Activated CD4-positive, alpha-beta T cell treated with anti-CD3 and anti-CD28 coated beads for 36 hours (primary cell): ENCODE measurements at regions of chrX and their contacts with region 1.

Region 1: DNA sequence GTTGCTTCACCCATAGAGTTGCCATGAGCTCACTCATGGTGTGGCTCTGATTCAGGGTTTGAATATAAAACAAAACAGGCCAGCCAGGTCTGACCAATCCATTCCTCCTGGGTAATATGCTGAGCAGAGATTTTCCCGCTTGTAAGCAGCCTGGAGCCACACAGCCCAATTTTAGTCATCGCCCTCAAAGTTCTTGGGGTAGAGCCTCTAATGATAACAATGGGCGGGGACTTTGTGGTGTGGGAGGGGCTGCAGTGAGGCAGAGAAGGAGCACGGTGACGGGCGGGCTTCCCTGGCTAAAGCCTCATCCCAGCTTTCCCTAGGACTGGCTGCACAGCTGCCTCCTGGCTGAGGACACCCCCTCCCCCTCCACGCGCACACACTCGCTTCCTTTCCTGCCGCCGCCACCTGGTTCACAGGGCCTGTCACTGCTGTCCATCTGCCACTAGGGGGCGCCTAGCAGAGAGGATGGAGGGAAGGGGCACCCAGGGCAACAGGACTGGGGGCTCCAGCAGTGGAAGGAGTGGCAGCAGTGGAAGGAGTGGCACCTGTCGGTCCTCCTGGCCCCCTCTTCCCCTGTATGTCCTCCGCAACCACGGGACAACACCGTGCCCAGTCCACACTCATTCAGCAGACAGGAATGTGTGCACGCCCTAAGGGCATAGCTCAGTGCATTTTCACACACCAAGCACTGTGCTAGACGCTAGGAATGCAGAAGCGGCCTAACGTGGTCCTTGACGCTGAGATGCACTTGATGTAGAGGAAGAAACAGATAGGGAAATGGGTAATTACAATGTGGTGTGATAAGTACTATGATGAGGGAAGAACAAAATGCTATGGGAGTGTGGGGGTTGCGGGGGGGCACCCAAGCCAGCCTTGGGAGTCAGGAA is 26.8 kb downstream of the PRPS1 start:
- DNase-seq: peak; percentile 81
- ATAC-seq: peak; percentile 83
- H3K4me3 Mint-ChIP-seq: no peak overlapping the region
- H3K27ac Mint-ChIP-seq: peak overlapping the region; percentile 2
- H3K4me1 Mint-ChIP-seq: peaks cover 12% of the 10 kb centered on the region
- H3K27me3 Mint-ChIP-seq: no peaks in the 10 kb centered on the region

Region 2: GRCh38 chrX:107537815-107538214 is 117.3 kb before region 1 on chrX:
- CTCF ChIA-PET with region 1: interaction called, 3 read pairs
- POLR2A ChIA-PET with region 1: no interaction called
- intact Hi-C with region 1: loop called (anchors 2 to 5 kb)
- DNase-seq: peak; percentile 60
- ATAC-seq: peak; percentile 70
- H3K4me3 Mint-ChIP-seq: no peak overlapping the region
- H3K27ac Mint-ChIP-seq: no peak overlapping the region
- H3K4me1 Mint-ChIP-seq: no peaks in the 10 kb centered on the region
- H3K27me3 Mint-ChIP-seq: peaks cover 3% of the 10 kb centered on the region

Region 3: DNA sequence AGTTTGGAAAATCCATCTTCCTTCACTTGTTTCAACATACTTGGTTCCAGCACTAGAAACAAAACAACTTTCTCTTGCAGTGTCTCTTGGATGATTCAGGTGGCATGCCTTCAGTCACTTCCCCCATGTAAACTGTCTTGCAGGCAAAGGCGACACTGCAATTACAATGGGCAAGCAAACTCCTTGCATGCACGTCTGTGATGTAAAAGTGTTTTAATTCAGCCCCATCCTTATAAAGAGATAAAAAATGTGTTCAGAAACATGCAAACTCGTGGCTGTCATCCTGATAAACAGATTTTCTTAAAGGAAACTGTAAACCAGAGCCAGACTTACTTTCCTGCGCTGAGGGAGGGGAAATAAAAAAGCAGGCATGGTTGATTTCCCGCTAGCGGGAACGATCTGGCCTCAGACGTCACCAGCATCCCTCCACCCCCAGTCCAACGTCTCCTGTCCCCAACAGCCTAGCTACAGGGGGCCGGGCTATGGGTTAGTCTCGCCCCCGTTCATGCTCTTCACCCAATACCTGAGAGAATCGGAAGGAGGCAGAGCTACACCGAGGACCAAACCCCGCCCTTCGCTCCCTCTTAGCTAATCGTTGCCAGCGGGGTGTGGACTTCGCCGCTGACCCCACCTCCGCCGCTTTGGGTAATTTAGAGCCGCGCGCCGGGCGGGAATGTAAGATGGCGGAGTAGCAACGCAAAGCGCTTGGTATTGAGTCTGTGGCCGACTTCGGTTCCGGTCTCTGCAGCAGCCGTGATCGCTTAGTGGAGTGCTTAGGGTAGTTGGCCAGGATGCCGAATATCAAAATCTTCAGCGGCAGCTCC is 27.1 kb before region 1 on chrX and contains the start of gene PRPS1:
- CTCF ChIA-PET with region 1: interaction called, 4 read pairs
- POLR2A ChIA-PET with region 1: interaction called, 3 read pairs
- intact Hi-C with region 1: loop called in 1 of 2 experiments (anchors 1 kb)
- DNase-seq: peak; percentile 93
- ATAC-seq: peak; percentile 99
- H3K4me3 Mint-ChIP-seq: peak within 1 kb of the TSS; percentile 89
- H3K27ac Mint-ChIP-seq: peak within 1 kb of the TSS; percentile 93
- H3K4me1 Mint-ChIP-seq: peaks cover 27% of the 10 kb centered on the region
- H3K27me3 Mint-ChIP-seq: no peaks in the 10 kb centered on the region
- total RNA-seq, gene PRPS1: 112 to 141 TPM

Region 4: DNA sequence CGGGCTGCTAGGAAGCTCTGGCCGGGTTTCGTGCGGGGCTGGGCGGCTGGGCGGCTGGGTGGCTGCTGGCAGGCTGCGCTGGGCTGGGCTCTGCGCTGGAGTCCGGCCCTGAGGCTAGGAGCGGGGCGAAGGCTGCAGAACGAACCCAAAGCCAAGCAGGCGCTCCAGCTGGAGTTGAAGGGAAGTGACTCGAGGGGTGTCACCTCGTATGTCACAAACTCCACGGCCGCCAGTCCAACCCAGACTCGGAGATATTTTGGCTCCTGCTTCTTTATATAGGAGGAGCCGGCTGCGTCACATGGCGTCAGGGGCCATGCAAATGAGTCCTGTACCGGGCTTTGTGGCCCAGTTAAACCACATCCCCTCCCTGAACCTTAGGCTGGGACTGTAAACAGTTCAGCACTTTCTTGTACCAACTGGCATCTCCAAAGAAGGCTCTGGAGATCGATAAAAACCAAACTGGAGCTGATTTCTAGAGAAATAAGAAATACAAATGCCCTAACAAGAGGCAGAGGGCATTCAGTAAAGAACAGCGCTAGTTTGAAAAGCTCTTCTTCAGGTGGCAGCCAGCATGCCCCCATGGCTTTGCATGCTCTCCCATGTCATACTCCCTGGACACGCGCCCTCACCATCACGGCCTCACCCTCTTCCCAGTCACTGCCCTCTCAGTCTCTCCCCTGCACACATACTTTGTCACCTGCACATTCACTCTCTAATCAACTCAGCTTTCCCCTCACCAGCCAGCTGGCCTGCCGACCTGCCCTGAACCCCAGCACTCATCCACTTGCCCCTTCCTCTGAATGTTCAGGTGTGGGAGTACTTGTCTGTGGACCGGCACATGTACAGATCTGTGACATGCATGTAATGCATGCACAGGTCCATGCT is 61.9 kb after region 1 on chrX:
- CTCF ChIA-PET with region 1: interaction called, 10 read pairs
- POLR2A ChIA-PET with region 1: no interaction called
- intact Hi-C with region 1: loop called in 1 of 2 experiments (anchors 1 kb)
- DNase-seq: peak; percentile 88
- ATAC-seq: peak; percentile 88
- H3K4me3 Mint-ChIP-seq: peak overlapping the region; percentile 90
- H3K27ac Mint-ChIP-seq: peak overlapping the region; percentile 92
- H3K4me1 Mint-ChIP-seq: peaks cover 43% of the 10 kb centered on the region
- H3K27me3 Mint-ChIP-seq: no peaks in the 10 kb centered on the region

Region 5: DNA sequence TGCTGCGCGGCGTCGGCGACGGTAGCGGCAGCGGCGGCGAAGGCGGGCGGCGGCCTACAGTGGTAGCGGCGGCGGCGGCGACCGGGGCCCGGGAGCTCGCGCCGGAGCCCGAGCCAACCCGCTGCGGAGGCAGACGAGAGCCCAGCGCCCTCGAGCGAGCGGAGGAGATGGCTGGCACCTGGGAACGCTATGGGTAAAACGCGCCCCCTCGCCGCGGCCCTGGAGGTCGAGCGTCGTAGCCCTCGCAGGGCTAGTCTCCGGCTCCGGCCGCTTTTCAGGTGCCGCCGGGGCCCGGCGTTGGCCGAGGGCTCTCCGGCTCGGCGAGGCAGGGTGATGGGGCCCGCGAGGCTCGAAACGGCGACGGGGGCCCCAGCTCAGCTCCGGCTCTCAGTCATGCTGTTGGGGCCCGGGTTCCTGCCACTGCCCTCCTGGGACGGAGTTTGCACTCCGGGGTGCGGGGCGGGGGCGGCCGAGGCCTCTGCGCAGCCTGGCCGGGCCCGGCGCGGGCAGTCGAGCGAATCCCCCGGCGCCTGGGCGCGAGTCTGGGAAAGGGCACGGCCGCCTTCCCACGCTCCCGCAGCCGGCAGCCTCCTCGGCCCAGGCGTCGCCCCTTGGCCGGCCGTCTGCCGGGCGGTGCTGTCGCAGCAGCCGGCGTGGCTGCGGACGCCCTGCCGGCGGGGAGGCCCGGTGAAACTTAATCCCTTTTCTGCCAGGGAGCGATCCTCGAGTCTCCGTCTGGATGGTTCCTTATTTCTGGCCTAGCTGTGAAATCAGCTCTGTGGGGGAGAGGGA is 171.3 kb after region 1 on chrX:
- CTCF ChIA-PET with region 1: no interaction called
- POLR2A ChIA-PET with region 1: no interaction called
- intact Hi-C with region 1: loop called in 1 of 2 experiments (anchors 5 kb)
- DNase-seq: peak; percentile 56
- ATAC-seq: peak; percentile 43
- H3K4me3 Mint-ChIP-seq: peak overlapping the region; percentile 75
- H3K27ac Mint-ChIP-seq: peak overlapping the region; percentile 78
- H3K4me1 Mint-ChIP-seq: peaks cover 46% of the 10 kb centered on the region
- H3K27me3 Mint-ChIP-seq: peaks cover 4% of the 10 kb centered on the region

Region 6: DNA sequence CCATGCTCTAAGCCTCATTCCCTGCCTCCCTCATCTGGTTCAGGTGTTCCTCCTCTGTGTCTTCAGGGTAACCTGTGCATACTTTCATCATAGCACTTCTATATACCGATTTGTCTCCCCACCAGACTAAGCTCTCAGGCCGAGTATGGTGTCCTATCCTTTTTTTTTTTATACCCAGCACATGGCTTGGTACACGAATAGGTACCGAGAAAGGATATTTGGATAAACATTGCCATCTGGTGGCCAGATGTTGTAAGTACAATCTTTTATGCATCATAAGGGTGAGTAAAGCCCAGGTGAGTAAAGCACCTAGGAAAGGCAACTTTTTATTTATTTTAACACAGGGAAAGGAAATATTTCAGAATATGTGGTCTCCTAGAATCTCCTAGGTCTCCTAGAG is 238.9 kb after region 1 on chrX:
- CTCF ChIA-PET with region 1: interaction called, 5 read pairs
- POLR2A ChIA-PET with region 1: no interaction called
- intact Hi-C with region 1: loop called (anchors 1 to 2 kb)
- DNase-seq: peak; percentile 16
- ATAC-seq: peak; percentile 82
- H3K4me3 Mint-ChIP-seq: no peak overlapping the region
- H3K27ac Mint-ChIP-seq: no peak overlapping the region
- H3K4me1 Mint-ChIP-seq: no peaks in the 10 kb centered on the region
- H3K27me3 Mint-ChIP-seq: no peaks in the 10 kb centered on the region

Region 7: DNA sequence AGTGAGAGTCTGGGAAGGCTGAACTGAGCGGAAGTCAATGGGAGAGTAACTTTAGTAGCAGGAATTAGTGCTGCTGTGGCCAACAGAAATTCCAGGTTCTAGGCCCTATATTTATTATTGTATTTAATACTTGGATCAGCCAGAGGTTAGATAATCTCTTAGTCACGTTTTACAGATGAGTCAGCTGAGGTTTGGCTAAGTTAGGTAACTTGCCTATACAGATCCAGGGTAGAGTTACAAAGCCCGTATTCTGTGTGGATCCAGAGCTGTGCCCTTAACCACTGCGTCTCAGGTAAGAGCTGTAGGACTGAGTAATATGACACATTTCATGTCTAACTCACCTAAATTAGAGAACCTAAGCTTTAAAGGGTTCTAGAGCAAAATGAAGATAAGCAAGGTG is 415.8 kb after region 1 on chrX:
- CTCF ChIA-PET with region 1: interaction called, 4 read pairs
- POLR2A ChIA-PET with region 1: no interaction called
- intact Hi-C with region 1: loop called in 1 of 2 experiments (anchors 2 kb)
- DNase-seq: no peak
- ATAC-seq: no peak
- H3K4me3 Mint-ChIP-seq: no peak overlapping the region
- H3K27ac Mint-ChIP-seq: no peak overlapping the region
- H3K4me1 Mint-ChIP-seq: peaks cover 4% of the 10 kb centered on the region
- H3K27me3 Mint-ChIP-seq: no peaks in the 10 kb centered on the region